Activated B cell treated with CpG ODN at 0.5 μM for 24 hours (primary cell): ENCODE measurements at regions of chr6 and their contacts with region 1.

Region 1: GRCh38 chr6:3766214-3766613 is 14.7 kb upstream of the PXDC1 start:
- DNase-seq: no peak
- ATAC-seq: no peak
- H3K4me3 Mint-ChIP-seq: no peak overlapping the region
- H3K27ac Mint-ChIP-seq: no peak overlapping the region
- H3K4me1 Mint-ChIP-seq: peaks cover 50% of the 10 kb centered on the region
- H3K27me3 Mint-ChIP-seq: no peaks in the 10 kb centered on the region
- CTCF ChIP-seq: no peak

Region 2: GRCh38 chr6:3751730-3752542 is 14.3 kb before region 1 on chr6:
- CTCF ChIA-PET with region 1: interaction called, 4 read pairs
- POLR2A ChIA-PET with region 1: interaction called, 3 read pairs
- intact Hi-C with region 1: loop called (anchors 2 kb)
- DNase-seq: peak; percentile 72
- ATAC-seq: peak; percentile 73
- H3K4me3 Mint-ChIP-seq: peak overlapping the region; percentile 72
- H3K27ac Mint-ChIP-seq: no peak overlapping the region
- H3K4me1 Mint-ChIP-seq: peaks cover 52% of the 10 kb centered on the region
- H3K27me3 Mint-ChIP-seq: no peaks in the 10 kb centered on the region
- CTCF ChIP-seq: no peak

Region 3: DNA sequence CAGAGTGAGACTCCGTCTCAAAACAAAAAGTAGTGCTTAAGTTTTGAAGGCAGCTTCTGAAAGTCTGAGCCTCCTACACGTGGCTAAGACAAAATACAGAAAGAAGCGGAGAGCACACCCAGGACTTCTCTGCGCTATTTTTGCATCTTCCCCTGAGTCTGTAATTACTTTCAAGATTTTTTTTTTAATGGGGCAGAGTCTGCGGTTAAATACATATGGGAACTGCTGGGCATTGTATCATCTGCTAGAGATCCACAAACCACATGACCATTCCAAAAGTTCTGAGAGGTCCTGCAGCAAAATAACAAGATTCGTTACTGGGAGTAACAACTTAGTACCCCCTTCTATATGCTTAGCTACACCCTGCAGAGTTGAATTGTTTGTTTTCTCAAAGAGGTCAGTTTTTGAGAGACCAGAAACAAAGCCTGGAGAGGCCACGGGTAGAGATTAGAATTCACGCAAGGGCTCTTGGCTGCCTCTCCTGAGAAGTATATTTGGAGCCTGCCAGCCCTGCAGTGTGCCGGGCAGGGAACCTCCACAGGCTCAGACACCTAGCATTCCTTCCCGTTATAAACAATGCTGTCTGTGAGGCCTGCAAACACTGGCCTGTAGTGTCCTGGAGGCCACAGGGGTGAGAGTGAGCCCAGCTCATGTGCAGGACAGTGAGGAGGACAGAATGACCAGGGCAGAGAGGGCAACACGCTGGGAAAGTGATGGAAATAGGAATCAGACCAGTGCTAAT is 34.8 kb after region 1 on chr6:
- CTCF ChIA-PET with region 1: no interaction called
- POLR2A ChIA-PET with region 1: no interaction called
- intact Hi-C with region 1: loop called (anchors 5 kb)
- DNase-seq: no peak
- ATAC-seq: no peak
- H3K4me3 Mint-ChIP-seq: no peak overlapping the region
- H3K27ac Mint-ChIP-seq: no peak overlapping the region
- H3K4me1 Mint-ChIP-seq: peaks cover 53% of the 10 kb centered on the region
- H3K27me3 Mint-ChIP-seq: no peaks in the 10 kb centered on the region
- CTCF ChIP-seq: no peak